ENCODE measurements at regions of chr1 and their contacts with region 1.

Region 1: GRCh38 chr1:26787706-26788514 is at the start of gene PIGV:
- DNase-seq: peak; percentile 75 to 90 (median 84)
- H3K4me3 ChIP-seq: peak within 1 kb of the TSS; percentile 65 to 98 (median 87)
- H3K27ac ChIP-seq: peak within 1 kb of the TSS; percentile 95 to 100 (median 100)
- H3K27me3 ChIP-seq: no peaks in the 10 kb centered on the region
- CTCF ChIP-seq: peak in 50 of 56 donors; percentile 10 to 63 (median 44)
- total RNA-seq, gene PIGV: 9.1 to 22.9 (median 14.3) TPM

Region 2: DNA sequence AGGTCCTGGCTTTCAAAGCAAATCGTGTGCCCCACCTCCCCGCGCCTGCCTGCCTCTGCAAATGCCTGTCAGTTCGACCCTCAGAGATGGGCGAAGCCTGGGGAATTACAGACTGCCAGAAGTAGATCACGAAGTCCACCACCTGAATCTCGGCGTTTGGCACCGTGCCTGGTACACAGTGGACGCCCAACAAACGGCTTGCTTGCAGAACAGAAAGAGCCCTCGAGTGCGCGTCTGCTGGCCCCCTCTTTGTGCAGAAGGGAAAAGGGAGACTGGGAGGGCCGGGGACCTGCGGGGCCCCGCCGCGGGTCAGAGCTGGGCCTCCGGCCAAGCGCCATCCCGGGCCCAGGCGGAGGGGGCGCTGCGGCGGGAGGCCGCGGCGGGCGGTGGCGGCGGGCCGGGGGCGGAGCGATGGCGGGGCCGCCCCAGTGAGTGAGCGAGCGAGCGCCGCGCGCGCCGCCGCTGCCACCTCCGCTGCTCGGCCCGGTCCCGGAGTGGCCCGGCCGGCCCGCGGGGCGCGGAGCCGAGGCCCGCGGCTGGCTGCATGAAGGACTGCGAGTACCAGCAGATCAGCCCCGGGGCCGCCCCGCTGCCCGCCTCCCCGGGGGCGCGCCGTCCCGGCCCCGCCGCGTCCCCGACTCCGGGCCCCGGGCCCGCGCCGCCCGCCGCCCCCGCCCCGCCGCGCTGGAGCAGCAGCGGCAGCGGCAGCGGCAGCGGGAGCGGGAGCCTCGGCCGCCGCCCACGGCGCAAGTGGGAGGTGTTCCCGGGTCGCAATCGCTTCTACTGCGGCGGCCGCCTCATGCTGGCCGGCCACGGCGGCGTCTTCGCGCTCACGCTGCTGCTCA is 38.6 kb after region 1 on chr1 and contains the start of gene ZDHHC18:
- intact Hi-C with region 1: loop called in 1 of 2 experiments (anchors 2 kb)
- DNase-seq: peak; percentile 47 to 84 (median 56)
- H3K4me3 ChIP-seq: peak within 1 kb of the TSS; percentile 51 to 90 (median 73)
- H3K27ac ChIP-seq: peak within 1 kb of the TSS in 58 of 59 donors; percentile 2 to 91 (median 84)
- H3K27me3 ChIP-seq: no peaks in the 10 kb centered on the region
- CTCF ChIP-seq: peak in 51 of 56 donors; percentile 18 to 69 (median 40)
- total RNA-seq, gene ZDHHC18: 22.8 to 51.7 (median 34.9) TPM

Region 3: GRCh38 chr1:26864610-26865527 is 77.0 kb after region 1 on chr1:
- intact Hi-C with region 1: no loop called
- DNase-seq: peak; percentile 92 to 98 (median 96)
- H3K4me3 ChIP-seq: peak overlapping the region; percentile 48 to 93 (median 76)
- H3K27ac ChIP-seq: peak overlapping the region; percentile 9 to 99 (median 90)
- H3K27me3 ChIP-seq: no peaks in the 10 kb centered on the region
- CTCF ChIP-seq: peak in 42 of 56 donors; percentile 9 to 64 (median 37)